Left ventricle myocardium inferior (tissue), 1 donor: ENCODE measurements at regions of chr6 and their contacts with region 1.

Region 1: GRCh38 chr6:54665278-54665677 is 181.3 kb upstream of the FAM83B start:
- DNase-seq: no peak
- H3K4me3 ChIP-seq: no peak overlapping the region
- H3K27ac ChIP-seq: no peak overlapping the region
- H3K4me1 ChIP-seq: no peaks in the 10 kb centered on the region
- H3K27me3 ChIP-seq: no peaks in the 10 kb centered on the region
- CTCF ChIP-seq: no peak

Region 2: DNA sequence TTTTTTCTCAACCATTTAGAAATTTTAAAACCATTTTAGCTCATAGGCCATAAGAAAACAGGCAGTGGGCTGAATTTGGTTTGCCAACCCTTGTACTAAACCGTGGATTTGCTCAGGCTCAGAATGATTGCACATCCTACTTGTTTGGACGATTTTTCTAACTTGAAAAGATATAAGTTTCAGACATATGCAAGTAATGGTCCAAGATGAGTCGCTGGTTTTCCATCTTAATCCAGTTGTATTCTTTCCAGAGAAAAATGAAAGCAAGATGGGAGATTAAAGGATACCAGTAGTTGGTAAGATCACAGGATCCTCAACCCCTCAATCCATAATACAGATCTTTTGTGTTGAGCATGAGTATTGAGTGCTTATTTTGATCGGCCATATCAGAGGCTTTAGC is 106.1 kb before region 1 on chr6:
- intact Hi-C with region 1: no loop called
- DNase-seq: no peak
- H3K4me3 ChIP-seq: no peak overlapping the region
- H3K27ac ChIP-seq: no peak overlapping the region
- H3K4me1 ChIP-seq: no peaks in the 10 kb centered on the region
- H3K27me3 ChIP-seq: no peaks in the 10 kb centered on the region
- CTCF ChIP-seq: no peak

Region 3: GRCh38 chr6:54595844-54596243 is 69.4 kb before region 1 on chr6:
- intact Hi-C with region 1: loop called (anchors 10 kb)
- DNase-seq: no peak
- H3K4me3 ChIP-seq: no peak overlapping the region
- H3K27ac ChIP-seq: no peak overlapping the region
- H3K4me1 ChIP-seq: no peaks in the 10 kb centered on the region
- H3K27me3 ChIP-seq: no peaks in the 10 kb centered on the region
- CTCF ChIP-seq: no peak